ENCODE measurements at regions of chr18 and their contacts with region 1.

Region 1: DNA sequence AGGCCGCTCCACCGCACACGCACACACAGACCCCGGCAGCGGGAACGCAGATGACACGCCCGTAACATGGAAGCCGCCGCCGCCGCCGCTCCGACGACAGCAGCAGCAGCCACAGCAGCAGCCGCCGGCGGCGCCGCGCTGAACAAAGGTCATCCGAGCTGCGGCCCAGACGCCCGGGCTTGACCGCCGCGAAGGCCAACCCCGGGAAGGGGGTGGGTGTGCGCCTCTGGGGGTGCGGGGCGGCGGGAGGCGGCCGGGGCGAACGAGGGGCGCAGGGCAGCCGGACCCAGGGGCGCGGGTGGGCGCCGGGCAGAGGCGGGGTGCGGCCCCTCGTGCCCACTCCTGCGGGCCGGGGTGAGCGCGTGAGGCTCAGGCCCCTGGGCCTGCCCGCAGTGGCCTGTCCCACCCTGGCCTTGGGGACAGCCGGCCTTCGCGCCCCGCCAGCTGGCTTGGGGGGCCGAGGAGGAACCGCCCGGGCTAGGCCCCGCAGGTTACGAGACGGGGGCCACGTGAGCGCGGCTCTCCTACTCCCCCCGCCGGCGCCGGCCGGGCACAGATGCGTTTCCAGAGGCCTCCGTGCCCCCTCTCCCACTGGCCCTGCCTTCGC is 1.0 kb upstream of the ZNF532 start:
- DNase-seq: peak; percentile 31
- H3K4me3 ChIP-seq: peak overlapping the region in 1 of 3 experiments; percentile 39
- H3K27ac ChIP-seq: peak overlapping the region; percentile 77
- H3K4me1 ChIP-seq: peaks cover 38% of the 10 kb centered on the region
- H3K27me3 ChIP-seq: no peaks in the 10 kb centered on the region
- CTCF ChIP-seq: peak in 1 of 2 donors; percentile 27
- POLR2A ChIP-seq: no peak

Region 2: DNA sequence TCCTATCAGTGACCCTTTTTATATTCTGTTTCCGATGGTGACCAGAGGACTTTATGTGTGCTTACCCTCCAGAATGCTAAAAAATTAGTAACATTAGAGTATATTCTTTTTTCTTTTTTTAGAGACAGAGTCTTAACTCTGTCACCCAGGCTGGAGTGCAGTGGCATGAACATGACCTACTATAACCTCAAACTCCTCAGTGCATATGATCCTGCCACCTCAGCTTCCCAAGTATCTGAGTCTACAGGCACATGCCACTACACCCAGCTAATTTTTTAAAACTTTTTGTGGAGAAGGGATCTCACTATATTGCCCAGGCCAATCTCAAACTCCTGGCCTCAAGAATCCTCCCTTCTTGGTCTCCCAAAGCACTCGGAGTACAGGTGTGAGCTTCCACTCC is 117.7 kb before region 1 on chr18:
- CTCF ChIA-PET with region 1: no interaction called
- POLR2A ChIA-PET with region 1: no interaction called
- dilution Hi-C with region 1: no loop called
- intact Hi-C with region 1: no loop called
- DNase-seq: no peak
- H3K4me3 ChIP-seq: no peak overlapping the region
- H3K27ac ChIP-seq: no peak overlapping the region
- H3K4me1 ChIP-seq: no peaks in the 10 kb centered on the region
- H3K27me3 ChIP-seq: no peaks in the 10 kb centered on the region
- CTCF ChIP-seq: no peak
- POLR2A ChIP-seq: no peak

Region 3: DNA sequence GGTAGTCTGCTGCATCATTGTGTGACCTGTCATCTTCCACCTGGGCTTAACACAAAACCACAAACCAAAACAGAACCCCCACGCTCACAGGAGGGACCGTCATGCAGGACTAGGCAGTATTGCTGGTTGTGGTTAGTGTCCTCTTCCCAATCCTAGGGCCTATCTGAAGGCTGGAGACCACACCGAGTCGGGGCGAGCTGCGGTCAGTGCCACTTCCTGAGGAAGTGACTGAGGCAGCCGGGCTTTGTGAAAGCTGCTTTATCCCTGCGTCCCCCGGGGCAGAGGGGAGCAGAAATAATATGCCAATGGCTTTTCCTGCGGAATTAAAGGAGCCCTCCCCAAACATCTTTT is 23.9 kb after region 1 on chr18:
- CTCF ChIA-PET with region 1: interaction called, 4 read pairs
- POLR2A ChIA-PET with region 1: no interaction called
- dilution Hi-C with region 1: no loop called
- intact Hi-C with region 1: loop called (anchors 2 kb)
- DNase-seq: peak; percentile 78
- H3K4me3 ChIP-seq: no peak overlapping the region
- H3K27ac ChIP-seq: peak overlapping the region; percentile 43
- H3K4me1 ChIP-seq: peaks cover 18% of the 10 kb centered on the region
- H3K27me3 ChIP-seq: no peaks in the 10 kb centered on the region
- CTCF ChIP-seq: no peak
- POLR2A ChIP-seq: peak; percentile 42

Region 4: DNA sequence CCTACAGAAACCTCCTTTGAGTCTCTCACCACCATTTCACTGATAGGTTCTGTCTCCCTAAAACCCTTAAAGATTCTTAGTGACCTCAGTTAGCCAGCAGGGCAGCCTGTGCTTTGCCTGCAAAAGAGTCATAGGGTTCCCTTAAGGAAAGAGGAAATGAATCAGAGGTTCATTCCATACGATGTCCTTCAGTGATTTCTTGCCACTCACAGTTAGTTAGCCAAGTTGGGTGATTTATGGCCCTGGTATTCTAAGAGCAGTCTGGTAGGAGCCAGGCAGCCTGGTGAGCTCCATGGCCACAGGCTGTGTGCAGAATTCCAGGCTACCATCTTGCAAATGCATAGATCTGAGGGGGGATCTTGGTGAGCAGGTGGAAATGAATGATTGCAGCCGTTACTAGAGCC is 852.3 kb after region 1 on chr18:
- CTCF ChIA-PET with region 1: no interaction called
- POLR2A ChIA-PET with region 1: no interaction called
- dilution Hi-C with region 1: no loop called
- intact Hi-C with region 1: no loop called
- DNase-seq: peak; percentile 77
- H3K4me3 ChIP-seq: no peak overlapping the region
- H3K27ac ChIP-seq: no peak overlapping the region
- H3K4me1 ChIP-seq: no peaks in the 10 kb centered on the region
- H3K27me3 ChIP-seq: no peaks in the 10 kb centered on the region
- CTCF ChIP-seq: no peak
- POLR2A ChIP-seq: no peak

Measured in endothelial cell of umbilical vein (primary cell).